ENCODE measurements at regions of chr2 and their contacts with region 1.

Region 1: GRCh38 chr2:108988796-108989713 is at the start of gene EDAR:
- DNase-seq: peak; percentile 12
- H3K4me3 Mint-ChIP-seq: peak within 1 kb of the TSS; percentile 23
- H3K27ac Mint-ChIP-seq: no peak within 1 kb of the TSS
- H3K4me1 Mint-ChIP-seq: peaks cover 13% of the 10 kb centered on the region
- H3K27me3 Mint-ChIP-seq: peaks cover 23% of the 10 kb centered on the region
- total RNA-seq, gene EDAR: 0.11 TPM in 2 replicates

Region 2: GRCh38 chr2:108927936-108928659 is 61.0 kb before region 1 on chr2:
- intact Hi-C with region 1: loop called (anchors 2 kb)
- DNase-seq: no peak
- H3K4me3 Mint-ChIP-seq: no peak overlapping the region
- H3K27ac Mint-ChIP-seq: no peak overlapping the region
- H3K4me1 Mint-ChIP-seq: no peaks in the 10 kb centered on the region
- H3K27me3 Mint-ChIP-seq: no peaks in the 10 kb centered on the region

Region 3: GRCh38 chr2:109644576-109645275 is 655.7 kb after region 1 on chr2:
- intact Hi-C with region 1: no loop called
- DNase-seq: no peak
- H3K4me3 Mint-ChIP-seq: no peak overlapping the region
- H3K27ac Mint-ChIP-seq: no peak overlapping the region
- H3K4me1 Mint-ChIP-seq: peaks cover 4% of the 10 kb centered on the region
- H3K27me3 Mint-ChIP-seq: no peaks in the 10 kb centered on the region

Measured in activated T-helper 2 cell treated with anti-CD3 and anti-CD28 coated beads, Interferon-gamma antibody, Interleukin-2, Interleukin-4, amounts not matched to agents 10 μg/mL and 5 μg/mL and 100 μg/mL, durations not matched to agents 14 hours and 24 hours and 36 hours (primary cell).